ENCODE measurements at regions of chr16 and their contacts with region 1.

Region 1: DNA sequence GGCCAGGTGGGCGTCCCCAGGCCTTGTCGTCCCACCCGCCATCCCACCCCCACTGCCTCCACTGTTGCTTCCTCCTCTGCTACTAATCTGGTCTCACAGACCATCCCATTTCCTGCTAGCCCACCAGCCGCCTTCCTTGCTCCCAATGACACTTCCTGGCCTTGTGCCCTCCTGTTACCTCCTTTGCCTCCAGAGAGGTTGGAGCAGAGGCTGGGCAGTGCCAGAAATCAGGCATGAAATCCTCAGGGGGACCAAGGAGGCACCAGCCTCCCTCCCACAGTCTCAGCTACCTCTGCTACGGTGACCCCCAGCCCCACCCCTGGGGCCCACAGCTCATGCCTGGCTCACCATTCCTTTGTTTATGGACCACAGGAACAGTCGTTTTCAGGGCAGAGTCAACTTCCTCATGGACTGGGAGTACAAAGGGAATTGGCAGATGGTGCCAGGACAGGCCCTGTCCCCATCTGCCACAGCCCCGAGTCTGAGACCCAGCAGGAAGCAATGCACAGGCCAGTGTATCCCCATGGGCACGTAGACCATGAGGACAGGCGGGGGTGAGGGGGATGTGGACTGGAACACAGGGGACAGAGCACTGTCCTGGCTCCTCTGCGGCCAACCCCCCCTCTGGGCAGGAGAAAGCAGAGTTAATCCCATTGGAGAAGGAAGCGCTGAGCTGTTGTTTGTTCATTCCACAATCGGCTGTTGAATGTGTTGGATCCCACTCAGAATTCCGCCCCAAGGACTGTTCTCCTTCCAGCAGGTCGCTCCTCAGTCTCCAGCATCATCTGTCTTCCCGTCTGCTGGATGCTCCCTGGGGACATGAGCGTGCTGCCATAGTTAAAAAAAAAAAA is 2.1 kb upstream of the CDH5 start:
- DNase-seq: peak; percentile 85
- H3K4me3 ChIP-seq: peak overlapping the region in 1 of 3 experiments; percentile 0
- H3K27ac ChIP-seq: peak overlapping the region; percentile 99
- H3K4me1 ChIP-seq: peaks cover 78% of the 10 kb centered on the region
- H3K27me3 ChIP-seq: no peaks in the 10 kb centered on the region
- CTCF ChIP-seq: no peak
- POLR2A ChIP-seq: no peak

Region 2: GRCh38 chr16:66270333-66270927 is 93.9 kb before region 1 on chr16:
- CTCF ChIA-PET with region 1: no interaction called
- POLR2A ChIA-PET with region 1: no interaction called
- dilution Hi-C with region 1: no loop called
- intact Hi-C with region 1: no loop called
- DNase-seq: peak; percentile 53
- H3K4me3 ChIP-seq: peak overlapping the region in 1 of 3 experiments; percentile 25
- H3K27ac ChIP-seq: no peak overlapping the region
- H3K4me1 ChIP-seq: peaks cover 4% of the 10 kb centered on the region
- H3K27me3 ChIP-seq: peaks cover 0 to 7% of the 10 kb centered on the region in 2 experiments
- CTCF ChIP-seq: peak; percentile 91
- POLR2A ChIP-seq: no peak

Region 3: GRCh38 chr16:66315210-66315825 is 49.0 kb before region 1 on chr16:
- CTCF ChIA-PET with region 1: no interaction called
- POLR2A ChIA-PET with region 1: no interaction called
- dilution Hi-C with region 1: no loop called
- intact Hi-C with region 1: no loop called
- DNase-seq: peak; percentile 73
- H3K4me3 ChIP-seq: no peak overlapping the region
- H3K27ac ChIP-seq: no peak overlapping the region
- H3K4me1 ChIP-seq: no peaks in the 10 kb centered on the region
- H3K27me3 ChIP-seq: no peaks in the 10 kb centered on the region
- CTCF ChIP-seq: peak; percentile 93 to 96
- POLR2A ChIP-seq: no peak

Region 4: GRCh38 chr16:66344533-66345145 is 19.7 kb before region 1 on chr16:
- CTCF ChIA-PET with region 1: interaction called, 66 read pairs
- POLR2A ChIA-PET with region 1: no interaction called
- dilution Hi-C with region 1: no loop called
- intact Hi-C with region 1: no loop called
- DNase-seq: peak; percentile 52
- H3K4me3 ChIP-seq: no peak overlapping the region
- H3K27ac ChIP-seq: no peak overlapping the region
- H3K4me1 ChIP-seq: no peaks in the 10 kb centered on the region
- H3K27me3 ChIP-seq: peaks cover 0 to 2% of the 10 kb centered on the region in 2 experiments
- CTCF ChIP-seq: peak; percentile 59 to 65
- POLR2A ChIP-seq: no peak

Region 5: DNA sequence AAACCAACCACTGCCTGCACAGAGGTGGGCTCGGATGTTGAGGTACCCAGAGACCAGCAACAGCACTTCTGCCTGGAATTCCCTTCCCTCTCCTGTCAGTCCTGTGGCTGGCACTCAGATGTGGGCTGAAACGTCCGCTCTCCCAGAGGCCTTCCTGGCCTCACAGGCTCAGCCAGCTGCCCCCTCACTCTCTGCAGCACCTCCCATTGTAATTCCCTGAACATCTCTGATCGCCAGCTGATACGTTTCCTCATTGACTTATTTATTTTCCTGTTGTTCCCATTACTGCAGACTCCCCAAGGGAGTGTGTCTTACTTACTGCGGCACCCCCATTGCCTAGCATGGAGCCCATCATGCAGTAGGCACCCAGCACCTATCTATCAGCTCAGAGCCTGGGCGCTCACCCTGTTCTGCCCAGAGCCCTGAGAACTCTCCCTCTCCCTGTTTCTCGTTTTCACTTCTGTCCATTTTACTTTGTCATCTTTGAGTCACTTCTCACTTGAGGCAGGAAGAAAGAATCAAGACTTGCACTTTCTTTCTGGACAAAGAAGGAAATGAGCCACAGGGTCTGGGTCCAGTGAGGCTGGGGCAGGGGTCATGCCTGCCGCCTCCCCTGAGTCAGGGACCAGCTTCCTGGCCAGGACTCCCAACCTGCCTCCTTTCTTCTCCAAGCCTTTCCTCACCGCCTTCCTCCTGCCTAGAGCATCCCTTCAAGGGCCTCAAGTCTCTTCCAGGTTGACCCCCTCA is 12.4 kb after region 1 on chr16:
- CTCF ChIA-PET with region 1: interaction called, 126 read pairs
- POLR2A ChIA-PET with region 1: interaction called, 53 read pairs
- dilution Hi-C with region 1: no loop called
- intact Hi-C with region 1: loop called (anchors 1 kb)
- DNase-seq: peak; percentile 83
- H3K4me3 ChIP-seq: no peak overlapping the region
- H3K27ac ChIP-seq: peak overlapping the region; percentile 96
- H3K4me1 ChIP-seq: peaks cover 87% of the 10 kb centered on the region
- H3K27me3 ChIP-seq: no peaks in the 10 kb centered on the region
- CTCF ChIP-seq: no peak
- POLR2A ChIP-seq: peak; percentile 39

Region 6: GRCh38 chr16:66382171-66382965 is 18.0 kb after region 1 on chr16:
- CTCF ChIA-PET with region 1: interaction called, 28 read pairs
- POLR2A ChIA-PET with region 1: interaction called, 33 read pairs
- dilution Hi-C with region 1: no loop called
- intact Hi-C with region 1: loop called (anchors 1 kb)
- DNase-seq: peak; percentile 98
- H3K4me3 ChIP-seq: peak overlapping the region in 1 of 3 experiments; percentile 29
- H3K27ac ChIP-seq: peak overlapping the region; percentile 100
- H3K4me1 ChIP-seq: peaks cover 59% of the 10 kb centered on the region
- H3K27me3 ChIP-seq: no peaks in the 10 kb centered on the region
- CTCF ChIP-seq: peak; percentile 35 to 43
- POLR2A ChIP-seq: peak; percentile 27

Region 7: DNA sequence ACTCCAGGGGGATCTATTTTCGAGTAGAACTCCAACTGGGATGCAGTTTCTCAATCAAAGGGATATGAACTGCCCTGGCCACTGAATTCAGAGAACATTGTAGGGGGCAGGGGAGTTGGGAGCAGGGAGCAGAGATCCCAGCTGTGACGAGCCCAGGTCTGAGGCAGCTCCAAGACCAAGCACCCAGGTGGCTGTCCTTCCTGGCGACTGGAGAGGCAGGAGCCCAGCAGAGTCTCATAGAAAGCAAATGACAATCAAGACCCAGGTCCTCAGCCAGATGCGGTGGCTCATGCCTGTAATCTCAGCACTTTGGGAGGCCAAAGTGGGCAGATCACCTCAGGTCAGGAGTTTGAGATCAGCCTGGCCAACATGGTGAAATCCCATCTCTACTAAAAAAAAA is 125.5 kb after region 1 on chr16:
- CTCF ChIA-PET with region 1: no interaction called
- POLR2A ChIA-PET with region 1: no interaction called
- dilution Hi-C with region 1: no loop called
- intact Hi-C with region 1: no loop called
- DNase-seq: no peak
- H3K4me3 ChIP-seq: no peak overlapping the region
- H3K27ac ChIP-seq: no peak overlapping the region
- H3K4me1 ChIP-seq: peaks cover 2% of the 10 kb centered on the region
- H3K27me3 ChIP-seq: peaks cover 0 to 1% of the 10 kb centered on the region in 2 experiments
- CTCF ChIP-seq: no peak
- POLR2A ChIP-seq: no peak

Measured in endothelial cell of umbilical vein (primary cell).